ENCODE measurements at regions of chr12 and their contacts with region 1.

Region 1: DNA sequence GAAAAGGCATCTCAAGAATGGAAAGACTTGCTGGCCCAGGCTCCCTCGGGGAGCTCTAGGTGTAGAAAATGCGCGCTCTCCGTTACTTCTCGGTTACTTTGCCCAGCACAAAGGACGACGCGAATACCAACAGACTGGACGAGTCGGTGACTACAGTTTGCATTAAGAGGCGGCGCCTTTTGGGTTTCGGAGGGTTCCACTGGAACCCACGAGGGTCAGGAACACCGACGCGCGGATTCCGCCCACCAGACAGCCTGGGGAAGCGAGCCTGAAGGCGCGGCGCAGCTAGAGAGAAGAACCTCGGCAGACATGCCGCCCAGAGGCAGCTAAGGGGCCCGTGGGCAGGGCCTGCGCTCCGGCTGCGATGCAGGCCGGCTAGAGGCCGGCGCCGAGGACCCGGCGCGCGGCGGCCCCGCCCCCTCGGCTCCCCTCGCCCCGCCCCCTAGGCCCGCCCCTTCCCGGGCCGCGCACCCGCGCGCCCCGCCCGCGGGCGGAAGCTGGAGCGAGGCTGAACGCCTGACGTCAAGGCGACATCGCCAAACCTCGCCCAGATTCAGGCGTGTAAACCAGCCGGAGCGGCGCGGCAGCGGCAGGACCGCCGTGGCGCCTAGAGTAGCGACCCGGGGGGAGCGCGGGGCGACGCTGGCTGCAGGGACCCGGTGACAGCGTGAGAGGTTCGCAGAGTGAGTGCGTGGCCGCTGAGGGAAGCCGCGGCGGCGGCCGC is at the start of gene RAP1B:
- DNase-seq: peak; percentile 89
- H3K4me3 Mint-ChIP-seq: peak within 1 kb of the TSS; percentile 91
- H3K27ac Mint-ChIP-seq: peak within 1 kb of the TSS; percentile 98
- H3K4me1 Mint-ChIP-seq: peaks cover 37% of the 10 kb centered on the region
- H3K27me3 Mint-ChIP-seq: no peaks in the 10 kb centered on the region
- total RNA-seq, gene RAP1B: 170 TPM

Region 2: DNA sequence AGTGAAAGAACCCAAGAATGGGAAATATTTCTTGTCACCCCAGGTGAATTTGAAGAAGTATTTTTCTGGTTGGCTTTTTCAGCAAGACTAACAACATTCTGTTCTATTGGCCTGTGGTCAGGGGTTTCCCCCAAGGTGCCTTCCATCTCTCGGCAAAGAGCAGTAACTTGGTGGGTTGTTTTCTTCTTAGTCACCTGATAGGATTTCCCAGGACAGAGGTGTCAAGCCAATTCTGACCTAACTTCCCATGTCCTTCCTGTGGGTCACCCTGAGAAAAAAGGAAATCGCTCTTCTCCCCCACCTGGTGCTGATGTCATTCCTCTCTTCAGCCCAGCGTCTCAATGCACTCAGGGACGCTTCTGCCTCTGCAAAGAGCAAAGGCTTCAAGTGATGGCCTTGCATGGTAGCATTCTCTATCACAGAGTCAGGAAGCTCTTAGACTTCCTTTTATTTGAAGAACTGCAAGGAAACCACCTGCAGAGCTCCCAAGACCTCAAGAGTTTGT is 434.9 kb before region 1 on chr12:
- CTCF ChIA-PET with region 1: no interaction called
- intact Hi-C with region 1: loop called (anchors 5 kb)
- DNase-seq: peak; percentile 87
- H3K4me3 Mint-ChIP-seq: peak overlapping the region; percentile 62
- H3K27ac Mint-ChIP-seq: peak overlapping the region; percentile 89
- H3K4me1 Mint-ChIP-seq: peaks cover 78% of the 10 kb centered on the region
- H3K27me3 Mint-ChIP-seq: no peaks in the 10 kb centered on the region

Region 3: DNA sequence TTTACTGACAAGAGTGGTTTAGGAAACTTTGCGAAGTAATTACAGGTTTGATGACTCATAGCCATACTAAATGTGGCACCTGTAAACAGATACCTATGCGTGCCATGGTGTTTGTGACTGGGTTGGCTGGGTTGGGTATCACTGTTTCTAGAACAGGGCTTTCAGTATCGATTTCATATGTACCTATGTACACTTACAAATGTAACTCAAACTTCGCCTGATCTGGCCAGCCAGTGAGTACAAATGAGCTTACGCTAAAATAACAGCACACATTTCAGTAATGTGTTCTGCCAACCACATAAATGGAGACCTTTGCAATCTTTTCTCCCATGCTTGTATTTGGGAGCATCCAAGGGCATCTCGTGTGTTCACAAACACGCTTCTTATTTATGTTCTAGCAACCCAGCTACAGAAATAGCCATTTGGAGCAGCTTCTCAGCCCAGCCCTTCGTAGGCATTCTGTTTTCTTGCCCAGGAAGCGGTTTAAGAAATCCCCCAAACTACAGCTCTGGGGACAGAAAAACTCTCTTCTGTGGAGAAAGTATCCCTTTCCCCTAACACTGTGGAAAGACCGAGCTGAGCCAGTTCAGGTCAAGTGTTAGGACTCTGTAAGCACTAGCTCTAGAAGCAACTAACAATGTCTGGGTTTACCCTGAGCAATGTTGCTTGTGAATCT is 236.1 kb before region 1 on chr12:
- CTCF ChIA-PET with region 1: interaction called, 4 read pairs
- intact Hi-C with region 1: loop called (anchors 1 kb)
- DNase-seq: peak; percentile 77
- H3K4me3 Mint-ChIP-seq: no peak overlapping the region
- H3K27ac Mint-ChIP-seq: peak overlapping the region; percentile 89
- H3K4me1 Mint-ChIP-seq: peaks cover 46% of the 10 kb centered on the region
- H3K27me3 Mint-ChIP-seq: peaks cover 3% of the 10 kb centered on the region

Region 4: GRCh38 chr12:68538726-68539614 is 71.6 kb before region 1 on chr12:
- CTCF ChIA-PET with region 1: no interaction called
- intact Hi-C with region 1: loop called (anchors 2 kb)
- DNase-seq: peak; percentile 73
- H3K4me3 Mint-ChIP-seq: peak overlapping the region; percentile 56
- H3K27ac Mint-ChIP-seq: peak overlapping the region; percentile 79
- H3K4me1 Mint-ChIP-seq: peaks cover 53% of the 10 kb centered on the region
- H3K27me3 Mint-ChIP-seq: no peaks in the 10 kb centered on the region

Region 5: GRCh38 chr12:68648179-68648578 is 37.6 kb after region 1 on chr12:
- CTCF ChIA-PET with region 1: no interaction called
- intact Hi-C with region 1: loop called (anchors 1 kb)
- DNase-seq: no peak
- H3K4me3 Mint-ChIP-seq: no peak overlapping the region
- H3K27ac Mint-ChIP-seq: peak overlapping the region; percentile 31
- H3K4me1 Mint-ChIP-seq: peaks cover 46% of the 10 kb centered on the region
- H3K27me3 Mint-ChIP-seq: no peaks in the 10 kb centered on the region

Region 6: DNA sequence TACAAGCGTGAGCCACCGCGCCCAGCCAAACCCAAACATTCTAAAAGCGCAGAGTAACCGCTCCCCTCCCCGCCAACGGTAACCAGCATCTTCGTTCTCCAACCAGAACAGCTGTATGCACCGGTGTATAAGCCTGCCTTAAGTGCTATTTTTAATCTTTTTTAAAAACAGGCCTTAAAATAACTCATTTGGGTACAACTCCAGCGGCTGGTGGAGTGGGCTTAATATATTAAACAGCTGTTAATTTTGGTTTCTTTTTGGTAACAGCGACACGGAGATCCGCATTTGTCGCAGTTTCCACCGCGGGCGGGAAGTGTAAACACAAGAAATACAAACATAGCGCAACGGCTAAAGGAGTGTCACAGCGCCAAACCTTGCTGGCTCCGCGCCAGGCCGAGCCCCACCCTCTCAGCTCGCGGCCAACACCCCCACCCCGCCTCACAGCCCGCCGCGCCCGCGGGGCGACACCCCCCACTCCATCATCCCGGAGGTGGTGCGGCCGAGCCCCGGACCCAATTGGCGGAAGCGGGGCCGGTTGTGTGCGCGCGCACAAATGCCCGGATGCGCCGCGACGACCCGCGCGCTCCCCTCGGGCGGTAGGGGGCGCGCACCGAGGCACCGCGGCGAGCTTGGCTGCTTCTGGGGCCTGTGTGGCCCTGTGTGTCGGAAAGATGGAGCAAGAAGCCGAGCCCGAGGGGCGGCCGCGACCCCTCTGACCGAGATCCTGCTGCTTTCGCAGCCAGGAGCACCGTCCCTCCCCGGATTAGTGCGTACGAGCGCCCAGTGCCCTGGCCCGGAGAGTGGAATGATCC is 197.2 kb after region 1 on chr12 and contains the start of gene MDM2:
- CTCF ChIA-PET with region 1: no interaction called
- intact Hi-C with region 1: loop called (anchors 1 kb)
- DNase-seq: peak; percentile 95
- H3K4me3 Mint-ChIP-seq: peak within 1 kb of the TSS; percentile 97
- H3K27ac Mint-ChIP-seq: peak within 1 kb of the TSS; percentile 98
- H3K4me1 Mint-ChIP-seq: peaks cover 24% of the 10 kb centered on the region
- H3K27me3 Mint-ChIP-seq: no peaks in the 10 kb centered on the region
- total RNA-seq, gene MDM2: 165 to 166 TPM

Measured in activated naive CD4-positive, alpha-beta T cell treated with anti-CD3 and anti-CD28 coated beads for 36 hours (primary cell).